ENCODE measurements at regions of chr2 and their contacts with region 1.

Region 1: GRCh38 chr2:69724540-69725159 is 17.3 kb upstream of the ANXA4 start:
- DNase-seq: peak; percentile 59 to 85 (median 74)
- ATAC-seq: peak; percentile 92
- H3K4me3 ChIP-seq: no peak overlapping the region
- H3K4me3 Mint-ChIP-seq: peak overlapping the region in 9 of 10 donors; percentile 35 to 81 (median 57)
- H3K27ac ChIP-seq: no peak overlapping the region
- H3K27ac Mint-ChIP-seq: no peak overlapping the region
- H3K4me1 ChIP-seq: peaks cover 0 to 4% of the 10 kb centered on the region in 2 donors
- H3K4me1 Mint-ChIP-seq: peaks cover 0 to 8% (median 5%) of the 10 kb centered on the region in 7 donors
- H3K27me3 ChIP-seq: no peaks in the 10 kb centered on the region
- H3K27me3 Mint-ChIP-seq: peaks cover 0 to 7% (median 0%) of the 10 kb centered on the region in 5 donors

Region 2: GRCh38 chr2:69565431-69565839 is 159.2 kb before region 1 on chr2:
- CTCF ChIA-PET with region 1: interaction called, 20 read pairs
- POLR2A ChIA-PET with region 1: no interaction called
- intact Hi-C with region 1: no loop called
- DNase-seq: peak; percentile 39 to 75 (median 51)
- ATAC-seq: peak; percentile 88
- H3K4me3 ChIP-seq: no peak overlapping the region
- H3K4me3 Mint-ChIP-seq: peak overlapping the region in 9 of 10 donors; percentile 63 to 84 (median 75)
- H3K27ac ChIP-seq: no peak overlapping the region
- H3K27ac Mint-ChIP-seq: peak overlapping the region; percentile 36 to 94 (median 77)
- H3K4me1 ChIP-seq: peaks cover 35 to 74% of the 10 kb centered on the region in 2 donors
- H3K4me1 Mint-ChIP-seq: peaks cover 63 to 99% (median 96%) of the 10 kb centered on the region in 7 donors
- H3K27me3 ChIP-seq: no peaks in the 10 kb centered on the region
- H3K27me3 Mint-ChIP-seq: no peaks in the 10 kb centered on the region

Region 3: DNA sequence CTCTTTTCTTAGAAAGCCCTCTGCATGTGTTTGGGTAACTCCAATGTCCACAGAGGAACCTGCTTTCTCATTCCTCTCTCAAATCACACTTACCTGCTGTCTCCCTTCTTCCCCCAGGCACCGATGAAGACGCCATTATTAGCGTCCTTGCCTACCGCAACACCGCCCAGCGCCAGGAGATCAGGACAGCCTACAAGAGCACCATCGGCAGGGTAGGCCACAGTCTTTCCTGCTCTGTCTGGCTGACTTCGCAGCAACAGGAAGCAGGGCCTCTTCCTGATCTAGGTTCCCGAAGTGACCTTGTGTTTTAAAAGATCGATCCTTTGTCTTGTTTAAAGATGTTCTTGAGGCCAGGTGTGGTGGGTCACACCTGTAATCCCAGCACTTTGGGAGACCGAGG is 79.8 kb after region 1 on chr2:
- CTCF ChIA-PET with region 1: interaction called, 11 read pairs
- POLR2A ChIA-PET with region 1: interaction called, 3 read pairs
- intact Hi-C with region 1: loop called in 1 of 2 experiments (anchors 5 kb)
- DNase-seq: peak in 2 of 9 donors; percentile 8 to 21
- ATAC-seq: no peak
- H3K4me3 ChIP-seq: no peak overlapping the region
- H3K4me3 Mint-ChIP-seq: peak overlapping the region in 9 of 10 donors; percentile 34 to 74 (median 60)
- H3K27ac ChIP-seq: no peak overlapping the region
- H3K27ac Mint-ChIP-seq: peak overlapping the region; percentile 26 to 80 (median 67)
- H3K4me1 ChIP-seq: peaks cover 0 to 4% of the 10 kb centered on the region in 2 donors
- H3K4me1 Mint-ChIP-seq: peaks cover 4 to 25% (median 19%) of the 10 kb centered on the region in 7 donors
- H3K27me3 ChIP-seq: no peaks in the 10 kb centered on the region
- H3K27me3 Mint-ChIP-seq: no peaks in the 10 kb centered on the region

Region 4: DNA sequence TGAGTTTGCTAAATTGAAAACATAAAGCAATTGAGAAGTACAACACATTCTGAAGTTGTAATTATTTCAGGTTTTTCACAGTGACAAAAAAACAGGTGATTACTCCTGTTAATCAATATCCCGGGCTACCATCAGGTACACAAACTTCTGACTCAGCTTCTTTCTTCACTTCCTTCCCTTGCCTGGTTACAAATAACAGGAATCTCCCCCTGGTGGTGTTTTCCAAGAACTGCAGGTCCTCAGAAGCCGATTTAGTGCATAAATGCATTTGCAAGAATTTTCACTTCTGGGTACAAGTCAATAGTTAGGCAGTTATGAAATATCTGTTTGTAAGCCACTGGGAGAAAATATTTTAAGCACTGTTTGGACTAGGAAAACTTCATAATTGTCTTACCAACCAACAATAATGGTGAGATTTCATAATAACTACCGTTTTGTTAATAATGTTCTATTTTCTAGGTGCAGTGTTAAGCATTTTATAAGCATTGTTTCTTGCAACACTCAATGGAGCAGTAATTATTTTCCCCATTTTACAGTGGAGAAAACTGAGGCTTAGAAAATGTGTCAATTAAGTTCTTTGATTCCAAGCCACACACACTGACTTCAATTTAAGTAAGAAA is 92.4 kb after region 1 on chr2:
- CTCF ChIA-PET with region 1: interaction called, 163 read pairs
- POLR2A ChIA-PET with region 1: interaction called, 5 read pairs
- intact Hi-C with region 1: loop called (anchors 1 kb)
- DNase-seq: peak in 8 of 9 donors; percentile 63 to 84 (median 79)
- ATAC-seq: peak; percentile 86
- H3K4me3 ChIP-seq: no peak overlapping the region
- H3K4me3 Mint-ChIP-seq: no peak overlapping the region
- H3K27ac ChIP-seq: no peak overlapping the region
- H3K27ac Mint-ChIP-seq: no peak overlapping the region
- H3K4me1 ChIP-seq: no peaks in the 10 kb centered on the region
- H3K4me1 Mint-ChIP-seq: peaks cover 0 to 15% (median 5%) of the 10 kb centered on the region in 7 donors
- H3K27me3 ChIP-seq: no peaks in the 10 kb centered on the region
- H3K27me3 Mint-ChIP-seq: no peaks in the 10 kb centered on the region

Region 5: DNA sequence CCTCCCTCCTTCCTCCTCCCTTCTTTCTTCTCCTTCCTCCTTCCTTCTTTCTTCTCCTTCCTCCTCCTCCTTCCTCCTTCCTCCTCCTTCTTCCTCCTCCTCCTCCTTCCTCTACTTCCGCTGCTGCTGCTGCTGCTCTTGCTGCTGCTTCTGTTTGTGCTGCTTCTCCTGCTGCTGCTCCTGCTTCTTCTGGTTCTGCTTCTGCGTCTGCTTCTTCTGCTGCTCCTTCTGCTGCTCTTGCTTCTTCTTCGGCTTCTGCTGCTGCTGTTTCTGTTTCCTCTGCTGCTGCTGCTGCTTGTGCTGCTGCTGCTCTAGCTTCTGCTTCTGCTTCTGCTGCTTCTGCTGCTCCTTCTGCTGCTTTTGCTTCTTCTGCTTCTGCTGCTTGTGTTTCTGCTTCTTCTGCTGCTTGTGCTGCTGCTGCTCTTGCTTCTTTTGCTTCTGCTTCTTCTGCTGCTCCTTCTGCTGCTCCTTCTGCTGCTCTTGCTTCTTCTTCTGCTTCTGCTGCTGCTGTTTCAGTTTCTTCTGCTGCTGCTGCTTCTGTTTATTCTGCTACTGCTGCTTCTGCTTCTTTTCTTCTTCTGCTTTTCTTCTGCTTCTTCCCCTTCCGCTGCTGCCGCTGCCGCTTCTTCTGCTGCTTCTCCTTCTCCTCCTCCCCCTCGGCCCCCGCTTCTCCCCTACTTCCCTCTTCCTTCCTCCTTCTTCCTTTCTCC is 177.7 kb after region 1 on chr2:
- CTCF ChIA-PET with region 1: no interaction called
- POLR2A ChIA-PET with region 1: no interaction called
- intact Hi-C with region 1: loop called in 1 of 2 experiments (anchors 10 kb)
- DNase-seq: peak in 5 of 9 donors; percentile 14 to 35 (median 25)
- ATAC-seq: peak; percentile 78
- H3K4me3 ChIP-seq: peak overlapping the region; percentile 65
- H3K4me3 Mint-ChIP-seq: peak overlapping the region; percentile 79 to 98 (median 90)
- H3K27ac ChIP-seq: peak overlapping the region; percentile 58
- H3K27ac Mint-ChIP-seq: peak overlapping the region; percentile 79 to 96 (median 88)
- H3K4me1 ChIP-seq: peaks cover 0 to 21% of the 10 kb centered on the region in 2 donors
- H3K4me1 Mint-ChIP-seq: peaks cover 28 to 79% (median 61%) of the 10 kb centered on the region in 7 donors
- H3K27me3 ChIP-seq: no peaks in the 10 kb centered on the region
- H3K27me3 Mint-ChIP-seq: no peaks in the 10 kb centered on the region

Region 6: GRCh38 chr2:69917854-69918253 is 193.2 kb after region 1 on chr2:
- CTCF ChIA-PET with region 1: no interaction called
- POLR2A ChIA-PET with region 1: no interaction called
- intact Hi-C with region 1: no loop called
- DNase-seq: no peak
- ATAC-seq: no peak
- H3K4me3 ChIP-seq: no peak overlapping the region
- H3K4me3 Mint-ChIP-seq: peak overlapping the region in 2 of 10 donors; percentile 8 to 47
- H3K27ac ChIP-seq: no peak overlapping the region
- H3K27ac Mint-ChIP-seq: peak overlapping the region in 2 of 9 donors; percentile 14 to 20
- H3K4me1 ChIP-seq: peaks cover 0 to 8% of the 10 kb centered on the region in 2 donors
- H3K4me1 Mint-ChIP-seq: peaks cover 8 to 35% (median 29%) of the 10 kb centered on the region in 7 donors
- H3K27me3 ChIP-seq: no peaks in the 10 kb centered on the region
- H3K27me3 Mint-ChIP-seq: no peaks in the 10 kb centered on the region

Region 7: DNA sequence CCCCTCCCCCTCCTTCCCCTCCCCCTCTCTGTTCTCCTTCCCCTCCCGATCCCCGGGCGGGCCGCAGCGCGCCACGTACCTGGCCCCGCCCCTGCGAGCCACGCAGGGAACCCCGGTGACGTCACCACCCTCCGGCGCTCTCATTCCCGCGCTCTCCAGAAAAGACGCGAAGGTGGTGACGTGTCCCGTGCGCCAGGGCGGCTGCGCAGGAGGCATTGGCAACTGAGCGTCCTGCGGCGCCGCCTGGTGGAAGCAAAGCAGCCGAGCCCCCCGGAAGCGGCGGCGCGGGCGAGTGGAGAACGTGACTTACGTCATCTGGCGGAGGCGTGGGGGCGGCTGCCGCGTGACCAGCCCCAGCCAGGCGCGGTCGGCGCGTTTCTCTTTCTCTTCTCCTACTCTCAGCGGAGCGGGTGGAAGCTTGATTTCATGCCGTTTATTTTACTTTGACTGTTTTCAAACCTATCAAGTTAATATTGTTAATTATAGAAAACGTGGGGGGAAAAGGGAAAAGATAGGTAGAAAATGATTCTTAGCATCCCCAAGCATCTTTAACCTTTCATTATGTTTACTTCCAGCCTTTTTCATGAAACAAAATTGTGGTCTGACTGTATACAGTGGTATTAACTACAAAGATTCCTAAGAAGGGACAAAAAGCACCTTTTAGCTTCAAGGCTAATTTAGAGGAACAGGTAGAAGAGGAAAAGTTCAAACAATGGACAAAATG is 418.1 kb after region 1 on chr2:
- CTCF ChIA-PET with region 1: no interaction called
- POLR2A ChIA-PET with region 1: no interaction called
- intact Hi-C with region 1: loop called (anchors 10 kb)
- DNase-seq: peak; percentile 99 to 100 (median 100)
- ATAC-seq: peak; percentile 85
- H3K4me3 ChIP-seq: peak overlapping the region; percentile 81
- H3K4me3 Mint-ChIP-seq: peak overlapping the region; percentile 83 to 96 (median 91)
- H3K27ac ChIP-seq: peak overlapping the region; percentile 97
- H3K27ac Mint-ChIP-seq: peak overlapping the region; percentile 97 to 99 (median 97)
- H3K4me1 ChIP-seq: peaks cover 27 to 39% of the 10 kb centered on the region in 2 donors
- H3K4me1 Mint-ChIP-seq: peaks cover 37 to 69% (median 55%) of the 10 kb centered on the region in 7 donors
- H3K27me3 ChIP-seq: no peaks in the 10 kb centered on the region
- H3K27me3 Mint-ChIP-seq: peaks cover 0 to 2% (median 0%) of the 10 kb centered on the region in 5 donors